OCI-LY7 (cell line): ENCODE measurements at regions of chr6 and their contacts with region 1.

Region 1: DNA sequence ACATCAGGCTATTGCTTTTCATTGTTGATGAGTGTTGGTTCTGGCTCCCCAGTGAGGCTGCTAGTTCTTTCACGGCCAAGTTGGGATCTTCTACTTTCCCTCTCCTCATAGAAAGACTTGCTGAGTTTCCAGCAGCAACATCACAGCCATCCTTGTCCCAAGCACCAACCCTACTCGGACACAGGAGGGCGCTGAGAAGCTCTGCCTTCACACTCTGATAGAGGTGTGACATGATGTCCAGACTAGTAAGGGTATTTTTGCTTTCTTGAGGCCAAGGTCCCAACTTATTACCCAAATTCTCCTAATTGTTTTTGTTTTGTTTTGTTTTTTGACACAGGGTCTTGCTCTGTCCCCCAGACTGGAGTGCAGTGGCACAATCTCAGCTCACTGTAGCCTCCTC is 3.0 kb upstream of the GCM1 start:
- DNase-seq: peak; percentile 35
- H3K4me3 ChIP-seq: no peak overlapping the region
- H3K27ac ChIP-seq: no peak overlapping the region
- H3K4me1 ChIP-seq: no peaks in the 10 kb centered on the region
- CTCF ChIP-seq: peak; percentile 74

Region 2: GRCh38 chr6:53086302-53086701 is 65.4 kb before region 1 on chr6:
- CTCF ChIA-PET with region 1: no interaction called
- POLR2A ChIA-PET with region 1: no interaction called
- intact Hi-C with region 1: no loop called
- DNase-seq: no peak
- H3K4me3 ChIP-seq: no peak overlapping the region
- H3K27ac ChIP-seq: no peak overlapping the region
- H3K4me1 ChIP-seq: no peaks in the 10 kb centered on the region
- CTCF ChIP-seq: no peak

Region 3: DNA sequence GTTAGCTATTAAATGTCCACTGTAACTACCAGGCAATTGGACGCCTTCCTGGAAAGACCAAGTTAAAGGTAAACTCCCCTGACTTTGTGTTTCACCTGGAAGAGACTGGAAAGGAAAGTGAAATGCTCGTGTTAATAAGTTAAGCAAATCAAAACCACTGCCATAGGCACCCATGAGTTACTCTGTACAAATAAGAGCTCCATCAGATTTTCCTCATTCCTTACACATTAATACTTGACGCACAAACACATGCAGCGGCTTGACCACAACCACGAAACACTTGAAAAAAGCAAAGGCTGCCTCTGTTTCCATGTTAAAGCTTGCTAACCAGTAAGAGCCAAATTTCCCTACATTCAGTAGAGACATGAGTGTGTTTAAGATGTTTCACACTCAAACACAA is 22.8 kb before region 1 on chr6:
- CTCF ChIA-PET with region 1: no interaction called
- POLR2A ChIA-PET with region 1: no interaction called
- intact Hi-C with region 1: no loop called
- DNase-seq: no peak
- H3K4me3 ChIP-seq: no peak overlapping the region
- H3K27ac ChIP-seq: no peak overlapping the region
- H3K4me1 ChIP-seq: no peaks in the 10 kb centered on the region
- CTCF ChIP-seq: no peak

Region 4: DNA sequence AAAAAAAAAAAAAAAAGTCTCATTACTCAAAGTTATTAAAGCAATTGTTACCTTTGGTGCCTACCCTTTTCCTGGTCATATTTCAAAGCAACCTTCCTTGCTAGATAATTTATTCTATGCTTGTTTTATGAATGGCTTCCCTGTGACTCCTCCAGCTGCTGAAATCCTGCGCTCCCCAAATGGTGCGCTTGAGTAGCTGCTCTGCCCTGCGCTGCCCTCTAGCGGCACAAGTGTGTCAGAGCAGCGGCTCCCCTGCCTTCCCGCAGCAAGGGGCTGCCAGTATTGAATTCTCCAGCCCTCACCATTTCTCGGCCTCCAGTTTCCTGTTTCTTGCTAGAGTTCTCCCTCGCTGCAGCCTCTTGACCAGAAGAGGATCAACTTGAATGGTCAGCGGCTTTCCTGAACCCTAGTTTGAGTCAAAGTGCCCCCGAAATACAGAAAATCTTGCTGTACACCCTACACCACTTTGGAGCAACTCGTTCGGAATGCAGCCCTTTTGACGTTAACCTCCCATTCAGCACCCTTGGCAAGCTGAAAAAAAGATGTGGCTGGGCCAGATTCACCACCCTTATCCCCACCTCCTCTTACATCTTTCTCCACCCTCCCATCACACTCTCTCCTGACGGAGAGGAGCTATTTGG is 574.2 kb after region 1 on chr6:
- CTCF ChIA-PET with region 1: no interaction called
- POLR2A ChIA-PET with region 1: no interaction called
- intact Hi-C with region 1: loop called (anchors 10 kb)
- DNase-seq: peak; percentile 70
- H3K4me3 ChIP-seq: no peak overlapping the region
- H3K27ac ChIP-seq: no peak overlapping the region
- H3K4me1 ChIP-seq: no peaks in the 10 kb centered on the region
- CTCF ChIP-seq: peak; percentile 89